HAP-1 (cell line): ENCODE measurements at regions of chr3 and their contacts with region 1.

Region 1: GRCh38 chr3:45499529-45499928 is 95.0 kb upstream of the LIMD1 start:
- DNase-seq: no peak
- H3K4me3 ChIP-seq: no peak overlapping the region
- H3K4me1 ChIP-seq: peaks cover 8% of the 10 kb centered on the region; the same call in 1 of the 2 replicates
- H3K27me3 ChIP-seq: no peaks in the 10 kb centered on the region

Region 2: GRCh38 chr3:45224824-45225464 is 274.6 kb before region 1 on chr3:
- in situ Hi-C with region 1: loop called (anchors 10 kb)
- DNase-seq: peak; percentile 50 to 83
- H3K4me3 ChIP-seq: peak overlapping the region; percentile 45
- H3K4me1 ChIP-seq: peaks cover 15% of the 10 kb centered on the region
- H3K27me3 ChIP-seq: no peaks in the 10 kb centered on the region

Region 3: DNA sequence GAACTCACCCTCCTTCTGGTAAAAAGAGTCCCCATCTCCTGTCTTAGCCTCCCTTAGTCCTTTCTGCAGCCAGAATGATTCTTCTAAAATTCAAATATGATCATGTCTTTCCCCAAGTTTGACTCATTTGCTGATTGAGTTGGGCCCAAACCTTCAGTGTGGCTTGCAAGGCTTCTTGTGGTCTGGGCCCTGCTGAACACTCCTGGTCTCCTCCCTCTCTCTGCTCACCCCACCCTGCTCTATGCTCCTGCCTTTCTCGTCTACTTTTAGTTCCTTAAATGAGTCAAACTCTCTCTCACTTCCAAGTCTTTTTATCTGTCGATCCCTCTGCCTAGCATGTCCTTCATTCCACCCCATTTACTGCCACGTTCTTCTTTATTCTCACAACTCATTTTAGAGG is 635.9 kb after region 1 on chr3:
- in situ Hi-C with region 1: no loop called
- DNase-seq: no peak
- H3K4me3 ChIP-seq: no peak overlapping the region
- H3K4me1 ChIP-seq: no peaks in the 10 kb centered on the region
- H3K27me3 ChIP-seq: no peaks in the 10 kb centered on the region; the same call in 1 of the 2 replicates